ENCODE measurements at regions of chr2 and their contacts with region 1.

Region 1: GRCh38 chr2:61434314-61434713 is 36.6 kb downstream of the USP34 start:
- DNase-seq: no peak
- ATAC-seq: no peak
- H3K4me3 Mint-ChIP-seq: no peak overlapping the region
- H3K27ac Mint-ChIP-seq: peak overlapping the region; percentile 63
- H3K4me1 Mint-ChIP-seq: peaks cover 55% of the 10 kb centered on the region
- H3K27me3 Mint-ChIP-seq: no peaks in the 10 kb centered on the region

Region 2: GRCh38 chr2:61419129-61419528 is 15.2 kb before region 1 on chr2:
- CTCF ChIA-PET with region 1: interaction called, 21 read pairs
- POLR2A ChIA-PET with region 1: no interaction called
- intact Hi-C with region 1: no loop called
- DNase-seq: peak; percentile 39
- ATAC-seq: peak; percentile 55
- H3K4me3 Mint-ChIP-seq: no peak overlapping the region
- H3K27ac Mint-ChIP-seq: no peak overlapping the region
- H3K4me1 Mint-ChIP-seq: peaks cover 49% of the 10 kb centered on the region
- H3K27me3 Mint-ChIP-seq: no peaks in the 10 kb centered on the region

Region 3: DNA sequence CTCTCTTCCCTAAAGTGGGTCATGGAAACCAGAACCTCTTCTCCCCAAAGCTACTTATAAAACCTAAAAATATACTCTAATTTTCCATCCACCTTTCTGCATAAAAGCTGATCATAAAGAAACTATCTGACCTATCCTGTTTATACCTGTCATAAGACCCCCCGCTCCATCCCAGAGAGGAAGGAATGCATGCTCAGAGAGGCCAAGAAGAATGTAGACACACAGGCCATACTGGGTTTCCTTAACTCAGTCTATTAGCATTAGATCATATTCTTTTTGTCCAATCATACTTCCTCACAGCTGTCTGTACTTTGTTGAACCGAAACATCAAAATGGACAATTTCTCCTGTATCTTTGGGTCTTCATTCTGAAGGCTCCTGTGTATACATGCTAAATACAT is 813.9 kb after region 1 on chr2:
- CTCF ChIA-PET with region 1: no interaction called
- POLR2A ChIA-PET with region 1: no interaction called
- intact Hi-C with region 1: no loop called
- DNase-seq: no peak
- ATAC-seq: no peak
- H3K4me3 Mint-ChIP-seq: no peak overlapping the region
- H3K27ac Mint-ChIP-seq: no peak overlapping the region
- H3K4me1 Mint-ChIP-seq: no peaks in the 10 kb centered on the region
- H3K27me3 Mint-ChIP-seq: no peaks in the 10 kb centered on the region

Measured in activated CD4-positive, alpha-beta T cell treated with anti-CD3 and anti-CD28 coated beads for 36 hours (primary cell).